ENCODE measurements at regions of chr16 and their contacts with region 1.

Region 1: GRCh38 chr16:30844671-30845449 is 49.0 kb downstream of the BCL7C start:
- DNase-seq: peak in 4 of 5 donors; percentile 62 to 85 (median 80)
- H3K4me3 ChIP-seq: no peak overlapping the region
- H3K27ac ChIP-seq: no peak overlapping the region
- H3K4me1 ChIP-seq: no peaks in the 10 kb centered on the region
- H3K27me3 ChIP-seq: no peaks in the 10 kb centered on the region
- CTCF ChIP-seq: peak; percentile 80 to 91 (median 90)
- EP300 ChIP-seq: no peak
- POLR2A ChIP-seq: no peak

Region 2: GRCh38 chr16:30893744-30894539 is 49.1 kb after region 1 on chr16 and contains the start of gene BCL7C:
- intact Hi-C with region 1: loop called in 1 of 4 experiments (anchors 5 kb)
- DNase-seq: peak; percentile 89 to 94 (median 91)
- H3K4me3 ChIP-seq: peak within 1 kb of the TSS; percentile 74
- H3K27ac ChIP-seq: peak within 1 kb of the TSS; percentile 64 to 92
- H3K4me1 ChIP-seq: peaks cover 15% of the 10 kb centered on the region
- H3K27me3 ChIP-seq: no peaks in the 10 kb centered on the region
- CTCF ChIP-seq: peak in 2 of 3 donors; percentile 67 to 77
- EP300 ChIP-seq: no peak
- POLR2A ChIP-seq: peak; percentile 39
- total RNA-seq, gene BCL7C: 34.4 to 54.8 (median 49.0) TPM

Region 3: GRCh38 chr16:30902029-30902972 is 57.4 kb after region 1 on chr16:
- intact Hi-C with region 1: loop called in 2 of 4 experiments (anchors 5 kb)
- DNase-seq: peak; percentile 62 to 82 (median 70)
- H3K4me3 ChIP-seq: peak overlapping the region; percentile 45
- H3K27ac ChIP-seq: peak overlapping the region; percentile 81 to 83
- H3K4me1 ChIP-seq: peaks cover 5% of the 10 kb centered on the region
- H3K27me3 ChIP-seq: no peaks in the 10 kb centered on the region
- CTCF ChIP-seq: peak in 2 of 3 donors; percentile 49 to 55
- EP300 ChIP-seq: no peak
- POLR2A ChIP-seq: peak; percentile 13

Region 4: DNA sequence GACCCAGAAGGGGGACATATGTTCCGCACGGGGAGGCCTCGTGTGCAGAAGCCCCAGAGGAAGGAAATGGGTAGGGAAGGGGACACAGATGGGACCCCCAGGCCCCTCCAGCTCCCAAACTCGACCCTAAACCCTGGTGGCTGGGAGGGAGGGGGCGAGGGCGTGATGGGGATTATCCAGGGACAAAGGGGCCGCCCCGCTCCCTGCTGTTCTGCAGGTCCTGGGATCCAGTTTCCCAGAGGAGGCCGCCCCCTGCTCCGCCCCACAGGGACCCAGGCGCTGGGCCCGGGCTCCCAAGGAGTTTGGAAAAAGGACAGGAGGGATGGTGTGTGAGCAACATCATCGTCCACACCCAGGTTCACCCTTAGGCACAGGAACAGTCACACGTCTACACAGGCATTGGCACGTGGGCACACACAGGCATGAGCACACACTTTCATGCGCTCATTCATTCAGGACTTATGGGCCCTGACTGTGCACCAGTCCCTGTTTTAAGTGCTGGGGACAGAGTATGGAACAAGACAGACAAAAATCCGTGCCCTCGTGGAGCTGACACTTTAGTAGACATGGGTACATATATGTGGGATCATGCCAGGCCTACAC is 65.7 kb after region 1 on chr16:
- intact Hi-C with region 1: loop called in 2 of 4 experiments (anchors 5 kb)
- DNase-seq: no peak
- H3K4me3 ChIP-seq: no peak overlapping the region
- H3K27ac ChIP-seq: no peak overlapping the region
- H3K4me1 ChIP-seq: no peaks in the 10 kb centered on the region
- H3K27me3 ChIP-seq: no peaks in the 10 kb centered on the region
- CTCF ChIP-seq: no peak
- EP300 ChIP-seq: no peak
- POLR2A ChIP-seq: no peak

Region 5: GRCh38 chr16:30922960-30923535 is 78.2 kb after region 1 on chr16:
- intact Hi-C with region 1: loop called in 2 of 4 experiments (anchors 1 to 2 kb)
- DNase-seq: peak; percentile 99 to 100 (median 99)
- H3K4me3 ChIP-seq: peak overlapping the region; percentile 84
- H3K27ac ChIP-seq: peak overlapping the region; percentile 96 to 97
- H3K4me1 ChIP-seq: no peaks in the 10 kb centered on the region
- H3K27me3 ChIP-seq: no peaks in the 10 kb centered on the region
- CTCF ChIP-seq: no peak
- EP300 ChIP-seq: no peak
- POLR2A ChIP-seq: peak; percentile 44

Region 6: DNA sequence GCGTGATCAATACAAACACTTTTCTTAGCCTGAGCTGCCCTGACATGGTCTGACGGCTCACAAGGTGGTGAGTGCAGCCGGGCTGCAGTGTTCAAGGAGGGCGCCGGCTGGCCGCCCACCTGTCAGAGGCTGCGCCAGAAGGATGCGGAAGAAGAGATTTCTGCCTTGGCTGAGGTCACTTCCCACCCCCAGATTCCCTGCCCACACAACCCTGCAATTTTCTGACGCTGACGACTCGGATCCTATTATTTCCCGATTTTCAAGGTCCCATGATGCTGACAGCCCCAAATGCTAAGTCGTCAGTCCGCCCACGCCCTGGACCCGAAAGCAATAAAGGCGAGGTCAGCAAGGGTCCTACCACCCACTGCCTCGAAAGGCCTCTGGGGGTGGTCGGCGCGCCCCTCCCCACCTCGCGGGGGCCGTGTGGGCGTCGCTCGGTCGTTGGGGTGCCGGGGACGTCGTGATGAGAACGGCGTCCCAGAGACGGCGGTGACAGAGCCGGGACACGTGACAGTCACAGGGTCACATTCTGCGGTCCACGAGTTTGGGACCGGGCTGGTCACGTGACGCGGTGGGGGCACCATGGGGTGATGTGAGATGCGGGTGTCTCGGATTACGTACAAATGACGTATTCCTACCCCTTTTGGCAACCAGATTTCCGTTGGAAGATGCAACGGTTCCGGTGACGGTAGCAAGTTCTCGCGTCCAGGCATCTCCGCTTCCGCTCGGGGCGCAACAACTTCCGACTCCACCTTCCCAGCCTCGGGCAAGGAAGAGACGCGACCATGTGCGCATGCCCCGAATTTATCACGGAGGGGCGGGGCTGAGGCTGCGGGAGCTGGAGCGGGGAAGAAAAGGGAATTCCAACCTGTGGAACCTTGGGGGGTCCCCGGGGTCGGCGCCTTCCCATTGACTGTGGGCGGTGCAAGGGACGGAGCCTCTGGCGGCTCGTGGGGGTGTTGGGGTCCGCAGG is 188.2 kb after region 1 on chr16 and contains the start of gene STX4:
- intact Hi-C with region 1: no loop called
- DNase-seq: peak; percentile 98 to 99 (median 98)
- H3K4me3 ChIP-seq: peak within 1 kb of the TSS; percentile 76
- H3K27ac ChIP-seq: peak within 1 kb of the TSS; percentile 86 to 97
- H3K4me1 ChIP-seq: peaks cover 6% of the 10 kb centered on the region
- H3K27me3 ChIP-seq: no peaks in the 10 kb centered on the region
- CTCF ChIP-seq: peak in 1 of 3 donors; percentile 11
- EP300 ChIP-seq: peak; percentile 83
- POLR2A ChIP-seq: peak; percentile 62
- total RNA-seq, gene STX4: 26.2 to 73.8 (median 59.2) TPM